Activated CD8-positive, alpha-beta T cell treated with anti-CD3 and anti-CD28 coated beads, Interleukin-2, amount 10 ng/mL, durations not matched to agents 7 days and 5 days (primary cell): ENCODE measurements at regions of chr14 and their contacts with region 1.

Region 1: GRCh38 chr14:65824285-65824977 is 411.9 kb downstream of the FUT8 start:
- DNase-seq: peak; percentile 78
- ATAC-seq: peak; percentile 93
- H3K4me3 Mint-ChIP-seq: no peak overlapping the region
- H3K27ac Mint-ChIP-seq: peak overlapping the region; percentile 75
- H3K4me1 Mint-ChIP-seq: peaks cover 29% of the 10 kb centered on the region
- H3K27me3 Mint-ChIP-seq: no peaks in the 10 kb centered on the region

Region 2: GRCh38 chr14:65412032-65412846 is 412.2 kb before region 1 on chr14 and contains the start of gene FUT8:
- CTCF ChIA-PET with region 1: interaction called, 136 read pairs
- POLR2A ChIA-PET with region 1: interaction called, 3 read pairs
- DNase-seq: peak; percentile 95
- ATAC-seq: peak; percentile 89
- H3K4me3 Mint-ChIP-seq: peak within 1 kb of the TSS; percentile 100
- H3K27ac Mint-ChIP-seq: peak within 1 kb of the TSS; percentile 98
- H3K4me1 Mint-ChIP-seq: peaks cover 53% of the 10 kb centered on the region
- H3K27me3 Mint-ChIP-seq: no peaks in the 10 kb centered on the region
- total RNA-seq, gene FUT8: 99.2 to 101 TPM

Region 3: GRCh38 chr14:65723348-65723747 is 101.1 kb before region 1 on chr14:
- CTCF ChIA-PET with region 1: no interaction called
- POLR2A ChIA-PET with region 1: no interaction called
- DNase-seq: no peak
- ATAC-seq: peak; percentile 55
- H3K4me3 Mint-ChIP-seq: peak overlapping the region; percentile 44
- H3K27ac Mint-ChIP-seq: peak overlapping the region; percentile 83
- H3K4me1 Mint-ChIP-seq: peaks cover 28% of the 10 kb centered on the region
- H3K27me3 Mint-ChIP-seq: no peaks in the 10 kb centered on the region

Region 4: GRCh38 chr14:65776193-65776852 is 48.1 kb before region 1 on chr14:
- CTCF ChIA-PET with region 1: no interaction called
- POLR2A ChIA-PET with region 1: no interaction called
- DNase-seq: no peak
- ATAC-seq: no peak
- H3K4me3 Mint-ChIP-seq: no peak overlapping the region
- H3K27ac Mint-ChIP-seq: no peak overlapping the region
- H3K4me1 Mint-ChIP-seq: no peaks in the 10 kb centered on the region
- H3K27me3 Mint-ChIP-seq: peaks cover 10% of the 10 kb centered on the region

Region 5: GRCh38 chr14:65840118-65840751 is 15.8 kb after region 1 on chr14:
- CTCF ChIA-PET with region 1: interaction called, 48 read pairs
- POLR2A ChIA-PET with region 1: no interaction called
- DNase-seq: no peak
- ATAC-seq: no peak
- H3K4me3 Mint-ChIP-seq: no peak overlapping the region
- H3K27ac Mint-ChIP-seq: peak overlapping the region; percentile 65
- H3K4me1 Mint-ChIP-seq: peaks cover 89% of the 10 kb centered on the region
- H3K27me3 Mint-ChIP-seq: no peaks in the 10 kb centered on the region

Region 6: DNA sequence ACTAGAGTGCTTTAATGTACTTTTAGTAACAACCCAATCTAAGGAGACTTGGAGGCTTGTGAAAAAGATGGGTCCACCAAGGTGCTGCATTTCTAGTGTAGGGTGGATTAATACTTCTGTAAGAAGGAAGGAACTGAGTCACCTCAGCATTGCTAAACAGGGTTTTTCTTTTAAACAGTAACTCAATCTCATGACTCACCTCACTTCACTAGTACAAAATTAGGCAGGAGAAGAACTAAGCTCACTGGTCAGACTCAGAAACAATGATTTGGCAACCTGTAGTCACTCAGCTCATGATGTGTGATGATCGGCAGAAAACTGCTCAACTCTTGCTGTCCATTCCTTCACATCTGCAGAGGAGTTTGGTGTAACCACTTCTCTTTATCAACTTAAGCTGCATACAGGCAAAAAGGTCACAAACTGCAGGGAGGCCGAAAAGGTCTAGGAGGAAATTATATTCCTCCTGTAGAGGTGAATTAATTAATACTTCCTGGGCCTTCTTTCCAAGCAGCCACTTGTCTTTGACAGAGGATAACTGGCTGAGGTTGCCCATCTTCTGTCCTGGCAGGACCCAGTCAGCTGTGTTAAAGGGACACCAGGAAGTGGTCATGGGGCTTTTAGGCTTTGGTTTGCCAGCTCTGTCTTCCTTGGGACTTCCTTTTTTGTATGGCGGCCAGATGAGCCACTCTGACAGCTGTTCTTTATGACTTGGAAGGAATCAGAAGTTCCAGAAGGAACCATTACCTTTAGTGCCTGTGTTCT is 55.0 kb after region 1 on chr14:
- CTCF ChIA-PET with region 1: interaction called, 16 read pairs
- POLR2A ChIA-PET with region 1: no interaction called
- DNase-seq: no peak
- ATAC-seq: peak; percentile 37
- H3K4me3 Mint-ChIP-seq: no peak overlapping the region
- H3K27ac Mint-ChIP-seq: peak overlapping the region; percentile 83
- H3K4me1 Mint-ChIP-seq: peaks cover 9% of the 10 kb centered on the region
- H3K27me3 Mint-ChIP-seq: no peaks in the 10 kb centered on the region

Region 7: DNA sequence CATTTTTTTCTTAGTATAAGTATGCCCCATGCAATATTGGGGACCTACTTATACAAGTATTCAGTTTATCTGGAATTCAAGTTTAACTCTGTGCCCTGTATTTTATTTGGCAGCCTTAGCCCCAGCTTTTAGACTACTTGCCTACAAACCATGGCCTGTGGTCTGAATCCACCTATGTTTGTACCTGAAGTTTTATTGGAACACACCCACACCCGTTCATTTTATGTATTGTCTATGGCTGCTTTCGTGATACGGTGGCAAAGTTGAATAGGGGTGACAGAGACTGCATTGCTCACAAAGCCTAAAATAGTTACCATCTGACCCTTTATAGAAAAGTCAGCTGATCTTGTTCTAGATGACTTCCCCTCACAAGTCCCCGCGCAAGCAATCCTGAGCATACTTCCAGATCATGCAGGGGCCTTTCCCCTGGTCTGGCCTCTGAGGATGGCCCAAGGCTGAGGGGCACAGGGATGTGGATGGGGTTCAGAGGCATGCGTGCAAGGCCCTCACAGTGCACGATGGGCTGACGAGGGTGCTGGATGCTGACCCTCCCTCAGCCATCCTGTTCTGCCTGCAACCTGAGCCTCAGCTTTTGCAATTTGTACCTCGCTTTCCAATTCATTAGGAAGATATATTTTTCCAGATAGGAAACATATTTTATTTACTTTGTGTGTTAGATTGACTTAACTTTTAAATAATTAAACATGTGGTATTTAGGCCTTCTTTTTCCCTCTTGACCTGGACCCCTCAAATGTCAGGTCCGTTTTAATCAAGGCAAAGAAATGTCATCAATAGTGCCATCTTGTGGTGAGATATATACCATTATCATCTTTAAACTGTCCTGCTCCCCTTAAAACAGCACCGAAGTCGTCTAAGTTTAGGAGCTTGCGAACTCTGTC is 134.5 kb after region 1 on chr14:
- CTCF ChIA-PET with region 1: interaction called, 108 read pairs
- POLR2A ChIA-PET with region 1: interaction called, 4 read pairs
- DNase-seq: no peak
- ATAC-seq: peak; percentile 77
- H3K4me3 Mint-ChIP-seq: no peak overlapping the region
- H3K27ac Mint-ChIP-seq: peak overlapping the region; percentile 56
- H3K4me1 Mint-ChIP-seq: peaks cover 34% of the 10 kb centered on the region
- H3K27me3 Mint-ChIP-seq: peaks cover 6% of the 10 kb centered on the region